ENCODE measurements at regions of chr16 and their contacts with region 1.

Region 1: DNA sequence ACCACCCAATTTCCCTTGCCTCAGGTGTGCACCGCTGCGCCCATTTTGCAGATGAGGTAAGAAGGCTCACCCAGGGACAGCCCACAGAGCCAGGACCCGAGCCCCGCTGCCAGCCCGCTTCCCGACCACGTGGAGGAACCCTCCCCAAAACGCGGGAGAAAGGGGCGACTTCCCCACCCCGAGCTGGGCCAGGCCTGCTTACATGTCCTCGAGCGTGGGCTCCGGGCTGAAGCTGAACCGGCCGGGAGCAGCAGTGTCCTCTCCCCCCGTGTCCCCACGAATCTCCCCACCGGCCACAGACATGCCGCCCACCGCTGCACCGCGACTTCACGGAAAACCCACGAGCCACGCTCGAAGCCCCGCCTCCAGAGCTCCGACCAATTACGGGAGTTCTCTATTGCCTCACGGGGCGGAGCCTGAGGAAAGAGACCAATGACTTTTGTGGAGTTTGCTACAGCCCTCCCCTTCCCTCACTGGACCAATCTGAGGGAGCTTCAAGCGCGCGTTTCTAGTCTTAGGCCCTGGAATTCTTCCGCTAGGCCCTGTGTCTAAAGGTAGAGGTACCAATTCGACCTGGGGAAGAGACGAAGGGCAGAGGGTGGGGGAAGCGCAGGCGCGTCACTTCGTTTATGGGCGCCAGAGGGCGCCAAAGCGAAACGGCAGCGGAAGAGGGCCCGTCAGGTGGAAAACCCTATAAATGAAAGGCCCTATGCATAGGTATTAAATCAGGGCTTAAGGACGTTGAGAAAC is at the start of gene DCTPP1:
- DNase-seq: peak; percentile 94
- H3K4me3 ChIP-seq: peak within 1 kb of the TSS; percentile 69 to 82
- H3K27ac ChIP-seq: peak within 1 kb of the TSS; percentile 41 to 56; a peak in 3 of 4 replicates
- H3K4me1 ChIP-seq: peaks cover 6 to 10% of the 10 kb centered on the region in 2 experiments; a peak in 1 of 4 replicates
- H3K27me3 ChIP-seq: no peaks in the 10 kb centered on the region
- CTCF ChIP-seq: peak; percentile 85
- EP300 ChIP-seq: no peak
- RAD21 ChIP-seq: peak; percentile 74
- polyA plus RNA-seq, gene DCTPP1: 78.9 and 79.2 TPM in 2 replicates

Region 2: DNA sequence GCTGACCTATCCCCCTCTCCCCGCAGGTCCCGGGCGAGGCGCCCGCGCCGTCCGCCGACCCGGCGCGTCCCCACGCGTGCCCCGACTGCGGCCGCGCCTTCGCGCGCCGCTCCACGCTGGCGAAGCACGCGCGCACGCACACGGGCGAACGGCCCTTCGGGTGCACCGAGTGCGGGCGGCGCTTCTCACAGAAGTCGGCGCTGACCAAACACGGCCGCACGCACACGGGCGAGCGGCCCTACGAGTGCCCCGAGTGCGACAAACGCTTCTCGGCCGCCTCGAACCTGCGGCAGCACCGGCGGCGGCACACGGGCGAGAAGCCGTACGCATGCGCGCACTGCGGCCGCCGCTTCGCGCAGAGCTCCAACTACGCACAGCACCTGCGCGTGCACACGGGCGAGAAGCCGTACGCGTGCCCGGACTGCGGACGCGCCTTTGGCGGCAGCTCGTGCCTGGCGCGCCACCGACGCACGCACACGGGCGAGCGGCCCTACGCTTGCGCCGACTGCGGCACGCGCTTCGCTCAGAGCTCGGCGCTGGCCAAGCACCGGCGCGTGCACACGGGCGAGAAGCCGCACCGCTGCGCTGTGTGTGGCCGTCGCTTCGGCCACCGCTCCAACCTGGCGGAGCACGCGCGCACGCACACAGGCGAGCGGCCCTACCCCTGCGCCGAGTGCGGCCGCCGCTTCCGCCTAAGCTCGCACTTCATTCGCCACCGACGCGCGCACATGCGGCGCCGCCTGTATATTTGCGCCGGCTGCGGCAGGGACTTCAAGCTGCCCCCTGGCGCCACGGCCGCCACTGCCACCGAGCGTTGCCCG is 12.1 kb before region 1 on chr16:
- CTCF ChIA-PET with region 1: interaction called, 24 read pairs
- POLR2A ChIA-PET with region 1: interaction called, 15 read pairs
- DNase-seq: peak; percentile 93
- H3K4me3 ChIP-seq: peak overlapping the region; percentile 12 to 40; a peak in 3 of 4 replicates
- H3K27ac ChIP-seq: peak overlapping the region in 1 of 2 experiments; percentile 50; a peak in 2 of 4 replicates
- H3K4me1 ChIP-seq: peaks cover 0 to 13% of the 10 kb centered on the region in 2 experiments; a peak in 1 of 4 replicates
- H3K27me3 ChIP-seq: no peaks in the 10 kb centered on the region
- CTCF ChIP-seq: no peak
- EP300 ChIP-seq: no peak
- RAD21 ChIP-seq: no peak; the same call in 1 of the 2 replicates

Region 3: GRCh38 chr16:30526823-30527635 is 97.2 kb after region 1 on chr16:
- CTCF ChIA-PET with region 1: interaction called, 15 read pairs
- POLR2A ChIA-PET with region 1: interaction called, 6 read pairs
- DNase-seq: peak; percentile 97
- H3K4me3 ChIP-seq: peak overlapping the region; percentile 80
- H3K27ac ChIP-seq: peak overlapping the region; percentile 94 to 98
- H3K4me1 ChIP-seq: peaks cover 6 to 11% of the 10 kb centered on the region in 2 experiments; a peak in 3 of 4 replicates
- H3K27me3 ChIP-seq: no peaks in the 10 kb centered on the region
- CTCF ChIP-seq: peak; percentile 39
- EP300 ChIP-seq: peak in 1 of 2 experiments; percentile 22; a peak in 1 of 4 replicates
- RAD21 ChIP-seq: peak; percentile 14; the same call in 1 of the 2 replicates

Region 4: DNA sequence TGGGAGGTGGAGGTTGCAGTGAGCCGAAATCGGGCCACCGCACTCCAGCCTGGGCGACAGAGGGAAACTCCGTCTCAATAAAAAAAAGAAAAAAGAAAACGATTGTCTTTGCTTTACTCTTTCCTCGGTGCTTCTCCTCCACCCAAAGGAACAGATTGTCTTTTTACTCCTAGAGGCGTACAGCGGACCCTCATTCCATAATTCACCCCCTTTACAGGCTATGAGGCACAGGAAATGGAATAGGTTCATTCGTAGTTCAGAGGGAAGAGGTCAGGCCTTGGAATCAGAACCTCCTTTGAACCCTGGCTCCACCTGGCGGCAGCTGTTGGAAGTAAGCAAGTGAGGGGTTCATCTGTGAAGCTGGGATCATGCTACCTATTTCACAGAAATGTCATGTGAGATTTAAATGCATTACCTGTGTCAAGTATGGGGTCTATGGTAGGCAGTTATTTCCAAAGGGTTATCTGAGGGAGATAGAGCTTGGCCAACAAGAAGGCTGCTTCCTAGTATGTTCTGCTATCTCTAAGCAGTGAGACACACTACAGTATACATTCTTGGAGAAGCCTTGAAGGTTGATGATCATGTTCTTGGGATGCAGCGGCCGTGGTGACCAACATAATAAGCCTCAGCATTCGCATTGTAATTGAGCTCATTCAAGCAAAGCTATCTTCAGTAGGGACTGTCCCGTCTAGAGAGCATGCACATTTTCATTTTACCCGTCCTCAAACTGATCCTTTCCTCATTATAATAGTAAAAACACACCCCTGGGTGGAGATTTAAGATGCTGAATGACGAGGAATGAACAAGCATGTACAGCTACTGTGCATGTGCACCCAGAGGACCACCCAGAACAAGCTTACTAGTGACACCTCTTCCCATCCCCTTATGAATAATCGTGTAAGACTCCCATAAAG is 199.0 kb after region 1 on chr16:
- CTCF ChIA-PET with region 1: interaction called, 12 read pairs
- POLR2A ChIA-PET with region 1: no interaction called
- DNase-seq: peak; percentile 74
- H3K4me3 ChIP-seq: peak overlapping the region in 1 of 2 experiments; percentile 4; a peak in 1 of 4 replicates
- H3K27ac ChIP-seq: no peak overlapping the region
- H3K4me1 ChIP-seq: no peaks in the 10 kb centered on the region
- H3K27me3 ChIP-seq: no peaks in the 10 kb centered on the region
- CTCF ChIP-seq: peak; percentile 91
- EP300 ChIP-seq: no peak
- RAD21 ChIP-seq: peak; percentile 87